Sigmoid colon (tissue), 7 donors: ENCODE measurements at regions of chr13 and their contacts with region 1.

Region 1: GRCh38 chr13:102555917-102556553 is 40.8 kb upstream of the TPP2 start:
- DNase-seq: no peak
- H3K4me3 ChIP-seq: no peak overlapping the region
- H3K27ac ChIP-seq: no peak overlapping the region
- H3K4me1 ChIP-seq: no peaks in the 10 kb centered on the region
- H3K27me3 ChIP-seq: no peaks in the 10 kb centered on the region
- CTCF ChIP-seq: peak in 2 of 4 experiments; percentile 19 to 36
- EP300 ChIP-seq: no peak
- POLR2A ChIP-seq: no peak

Region 2: DNA sequence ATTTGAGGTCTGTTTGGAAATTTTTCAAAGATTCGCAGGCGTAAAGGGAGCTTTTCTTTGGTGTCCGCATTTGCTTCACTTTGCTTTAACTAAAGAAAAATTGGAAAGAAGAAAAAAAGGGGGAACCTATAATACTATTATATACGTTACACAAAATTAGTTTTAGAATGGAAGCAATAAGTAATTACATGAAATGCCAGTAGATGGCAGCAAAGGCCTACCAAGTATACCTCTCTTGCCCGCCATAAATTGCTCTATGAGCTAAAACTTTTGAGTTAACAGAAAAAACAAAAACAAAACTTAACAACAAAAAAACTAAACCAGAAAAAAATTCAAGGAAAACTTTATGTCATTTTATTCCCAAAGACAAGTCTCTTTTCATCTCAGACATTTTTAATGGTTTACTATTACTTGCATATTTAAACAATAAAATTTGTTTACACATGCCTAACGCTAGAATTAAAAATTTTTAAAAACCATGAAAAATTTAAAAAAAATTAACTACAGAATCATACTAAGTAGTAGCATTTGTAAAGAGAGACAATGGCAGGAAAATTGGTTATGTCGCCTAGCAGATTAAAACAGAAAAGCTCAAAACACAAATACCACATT is 1411.1 kb before region 1 on chr13:
- intact Hi-C with region 1: loop called (anchors 10 kb)
- DNase-seq: no peak
- H3K4me3 ChIP-seq: no peak overlapping the region
- H3K27ac ChIP-seq: no peak overlapping the region
- H3K4me1 ChIP-seq: no peaks in the 10 kb centered on the region
- H3K27me3 ChIP-seq: peaks cover 0 to 16% (median 0%) of the 10 kb centered on the region in 3 donors
- CTCF ChIP-seq: peak in 3 of 4 experiments; percentile 39 to 53 (median 46)
- EP300 ChIP-seq: no peak
- POLR2A ChIP-seq: no peak

Region 3: GRCh38 chr13:101942038-101942437 is 614.0 kb before region 1 on chr13:
- intact Hi-C with region 1: loop called (anchors 10 kb)
- DNase-seq: no peak
- H3K4me3 ChIP-seq: no peak overlapping the region
- H3K27ac ChIP-seq: no peak overlapping the region
- H3K4me1 ChIP-seq: no peaks in the 10 kb centered on the region
- H3K27me3 ChIP-seq: no peaks in the 10 kb centered on the region
- CTCF ChIP-seq: peak; percentile 48 to 88 (median 59)
- EP300 ChIP-seq: no peak
- POLR2A ChIP-seq: no peak

Region 4: DNA sequence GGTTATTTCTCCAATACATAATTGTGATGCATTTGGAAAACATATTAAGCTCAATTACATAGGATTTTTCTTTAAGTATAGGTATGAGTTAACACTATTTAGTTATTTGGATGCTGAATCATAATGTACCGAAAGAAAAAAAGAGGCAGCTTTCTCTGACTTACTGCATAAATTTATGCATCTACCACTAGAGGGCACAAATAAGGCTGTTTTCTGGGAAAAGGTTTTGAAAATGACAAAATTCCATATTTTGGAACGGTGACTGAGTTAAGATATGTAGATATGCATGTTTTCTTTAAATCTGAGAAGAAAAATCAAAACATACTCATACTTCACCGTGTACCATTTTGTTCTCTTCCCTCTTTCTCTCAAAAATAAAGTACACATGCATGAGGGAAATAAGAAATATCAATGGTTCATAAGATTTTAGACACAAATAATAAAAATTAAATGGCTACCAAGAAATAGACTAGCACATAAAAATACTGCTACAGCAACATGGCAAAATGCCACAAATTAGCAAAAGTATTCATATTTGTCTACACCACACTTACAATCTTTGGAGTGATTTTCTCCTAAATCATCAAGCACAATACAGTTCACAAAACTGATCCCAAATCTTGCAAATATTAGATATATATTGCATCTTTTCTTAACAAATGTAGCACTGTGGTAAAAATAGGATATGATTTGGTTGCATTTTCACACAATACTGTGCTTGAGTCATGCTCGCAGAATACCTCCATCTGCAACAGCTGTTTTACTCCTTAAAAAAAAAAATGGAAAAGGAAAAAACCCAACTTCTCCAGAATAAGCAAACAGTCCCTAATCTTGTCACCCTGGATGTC is 414.2 kb before region 1 on chr13:
- intact Hi-C with region 1: loop called (anchors 10 kb)
- DNase-seq: no peak
- H3K4me3 ChIP-seq: no peak overlapping the region
- H3K27ac ChIP-seq: no peak overlapping the region
- H3K4me1 ChIP-seq: no peaks in the 10 kb centered on the region
- H3K27me3 ChIP-seq: no peaks in the 10 kb centered on the region
- CTCF ChIP-seq: peak; percentile 11 to 41 (median 33)
- EP300 ChIP-seq: no peak
- POLR2A ChIP-seq: no peak

Region 5: DNA sequence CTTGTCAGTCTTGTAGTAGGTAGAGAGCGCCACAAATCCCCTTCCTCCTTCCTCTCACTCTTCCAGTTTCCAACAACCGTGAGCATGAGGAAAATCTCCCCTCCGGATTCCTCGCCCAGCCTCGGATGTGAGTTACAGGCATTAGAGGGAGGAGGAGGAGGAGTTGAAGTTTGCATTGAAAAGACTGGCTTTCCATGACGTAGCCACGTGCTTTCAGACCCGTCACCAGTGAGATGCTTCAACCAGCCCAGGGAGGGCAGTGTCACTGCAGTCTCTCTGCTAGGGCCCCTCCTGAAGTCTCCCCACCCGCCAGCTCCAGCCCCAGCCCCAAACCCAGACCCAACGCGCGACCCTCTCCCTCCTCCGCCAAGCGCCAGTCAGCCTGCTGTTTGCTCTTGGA is 153.7 kb before region 1 on chr13:
- intact Hi-C with region 1: loop called (anchors 10 kb)
- DNase-seq: peak; percentile 66
- H3K4me3 ChIP-seq: peak overlapping the region; percentile 45 to 56 (median 54)
- H3K27ac ChIP-seq: peak overlapping the region in 1 of 4 donors; percentile 73
- H3K4me1 ChIP-seq: peaks cover 0 to 28% (median 19%) of the 10 kb centered on the region in 4 donors
- H3K27me3 ChIP-seq: peaks cover 0 to 39% (median 20%) of the 10 kb centered on the region in 3 donors
- CTCF ChIP-seq: no peak
- EP300 ChIP-seq: no peak
- POLR2A ChIP-seq: no peak